PC-9 (cell line): ENCODE measurements at regions of chr1 and their contacts with region 1.

Region 1: DNA sequence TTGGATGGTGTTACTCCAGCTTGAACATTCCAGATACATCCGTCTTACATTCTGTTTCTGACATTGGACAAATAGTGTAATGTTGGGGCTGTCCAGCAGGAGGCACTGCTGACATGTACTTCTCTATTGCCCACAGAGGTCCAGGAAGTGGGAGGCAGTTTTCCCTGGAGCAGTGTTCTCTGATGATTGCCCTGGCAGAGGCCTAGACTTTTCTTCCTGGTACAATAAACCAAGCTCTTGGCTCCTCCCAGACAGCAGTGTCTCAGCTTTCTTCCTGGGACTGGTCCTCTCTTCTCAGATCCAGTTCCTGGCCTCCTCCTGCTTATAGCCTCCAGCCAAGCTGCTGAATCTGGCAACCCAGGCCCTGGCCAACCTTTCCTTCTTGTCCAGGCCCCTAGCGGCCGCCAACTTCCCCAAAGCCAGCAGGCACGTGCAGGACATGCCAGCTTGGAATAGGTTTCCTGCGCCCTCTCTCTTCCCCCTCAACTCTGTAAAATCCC is 14.9 kb upstream of the IFNLR1 start:
- DNase-seq: peak; percentile 86 to 89
- H3K4me3 ChIP-seq: no peak overlapping the region
- H3K27ac ChIP-seq: peak overlapping the region; percentile 76
- H3K4me1 ChIP-seq: peaks cover 27% of the 10 kb centered on the region
- H3K27me3 ChIP-seq: no peaks in the 10 kb centered on the region
- CTCF ChIP-seq: peak; percentile 86

Region 2: DNA sequence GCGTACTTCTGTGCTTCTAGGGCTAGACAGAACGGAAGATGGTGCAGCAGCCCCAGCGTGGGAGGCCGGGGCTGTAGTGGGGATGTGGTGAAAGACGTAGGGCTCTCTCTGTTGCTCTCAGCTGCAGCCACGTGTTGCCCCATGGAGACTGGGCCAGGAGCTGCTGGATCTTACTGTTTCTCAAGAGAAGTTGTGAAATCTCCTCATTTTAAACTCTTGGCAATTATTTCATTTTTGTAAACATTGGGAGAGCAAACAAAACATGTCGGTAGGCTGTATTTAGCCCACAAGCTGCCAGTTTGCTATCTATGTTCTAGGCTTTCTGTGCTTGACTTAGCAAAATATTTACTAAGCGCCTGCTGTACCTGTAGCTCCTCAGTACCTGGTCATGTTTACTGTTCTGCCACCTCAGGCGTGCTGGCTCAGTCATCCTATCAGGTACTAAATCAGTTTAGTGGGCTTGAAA is 474.6 kb before region 1 on chr1:
- CTCF ChIA-PET with region 1: no interaction called
- POLR2A ChIA-PET with region 1: no interaction called
- intact Hi-C with region 1: no loop called
- DNase-seq: no peak
- H3K4me3 ChIP-seq: no peak overlapping the region
- H3K27ac ChIP-seq: no peak overlapping the region
- H3K4me1 ChIP-seq: no peaks in the 10 kb centered on the region
- H3K27me3 ChIP-seq: no peaks in the 10 kb centered on the region
- CTCF ChIP-seq: no peak

Region 3: DNA sequence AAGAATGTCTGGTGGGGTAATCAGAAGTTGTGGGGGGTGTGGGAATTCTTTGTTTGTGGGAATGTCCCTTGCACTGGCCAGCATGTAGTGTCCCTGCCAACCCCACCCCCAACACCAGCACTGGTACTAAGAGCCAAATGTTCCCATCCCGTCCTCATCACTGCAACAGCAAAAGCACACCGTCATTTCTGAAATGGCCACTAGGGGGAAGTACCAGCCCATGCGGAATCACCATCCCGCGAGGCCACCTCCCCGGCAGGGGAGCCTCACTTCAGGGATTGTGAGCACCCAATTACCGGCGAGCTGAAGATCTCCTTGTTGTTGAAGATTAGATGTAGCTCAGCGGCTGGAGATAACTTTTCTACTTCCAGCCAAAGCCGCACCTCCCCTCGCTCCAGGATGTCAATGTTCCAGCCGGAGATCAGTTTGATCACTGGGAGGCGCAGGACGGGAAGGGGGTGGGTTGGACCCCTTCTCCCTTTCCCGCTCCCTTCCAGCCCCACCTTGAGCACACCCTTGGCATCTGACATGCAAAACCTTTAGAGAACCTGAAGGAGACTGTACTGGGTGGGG is 131.1 kb before region 1 on chr1:
- CTCF ChIA-PET with region 1: interaction called, 4 read pairs
- POLR2A ChIA-PET with region 1: no interaction called
- intact Hi-C with region 1: loop called (anchors 2 kb)
- DNase-seq: peak; percentile 57 to 76
- H3K4me3 ChIP-seq: no peak overlapping the region
- H3K27ac ChIP-seq: no peak overlapping the region
- H3K4me1 ChIP-seq: no peaks in the 10 kb centered on the region
- H3K27me3 ChIP-seq: no peaks in the 10 kb centered on the region
- CTCF ChIP-seq: peak; percentile 88

Region 4: DNA sequence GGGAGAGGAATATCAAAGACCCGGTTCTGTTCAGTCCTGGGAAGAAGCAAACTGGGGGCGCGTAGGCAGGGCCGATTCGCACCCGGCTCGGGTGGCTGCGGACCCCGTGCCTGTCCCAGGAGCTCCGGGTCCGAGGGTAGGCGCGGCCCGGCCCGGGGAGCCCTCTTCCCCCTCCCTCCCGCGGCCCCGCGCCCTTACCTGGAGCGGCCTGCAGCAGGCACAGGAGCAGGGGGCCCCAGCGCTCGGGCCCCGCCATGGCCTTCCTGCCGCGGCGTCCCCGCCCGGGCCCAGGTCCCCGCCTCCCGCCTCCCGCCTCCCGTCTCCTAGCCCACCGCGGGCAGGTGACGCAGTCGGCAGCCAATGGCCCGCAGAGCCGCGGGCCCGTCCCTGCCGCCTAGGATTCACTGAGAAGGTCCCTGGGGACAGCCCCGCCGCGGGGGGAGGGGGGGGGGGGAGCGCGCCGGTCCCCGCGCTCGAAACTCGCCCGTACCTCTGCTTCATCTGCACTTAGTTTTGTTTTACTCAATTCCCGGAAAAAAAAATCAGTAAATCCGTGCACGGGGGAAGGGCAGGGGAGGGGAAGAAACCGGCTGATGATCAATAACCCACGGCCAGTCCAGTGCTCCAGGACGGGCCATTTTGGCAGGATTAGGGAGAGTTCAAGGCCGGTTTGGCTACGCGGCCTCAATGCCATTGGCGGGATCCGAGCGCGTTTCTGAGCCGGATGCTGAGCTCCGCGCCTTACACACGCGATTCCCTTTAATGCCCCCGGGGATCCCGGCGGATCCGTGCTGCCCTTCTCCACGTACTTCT is 14.8 kb before region 1 on chr1 and contains the start of gene IFNLR1:
- CTCF ChIA-PET with region 1: interaction called, 4 read pairs
- POLR2A ChIA-PET with region 1: interaction called, 20 read pairs
- intact Hi-C with region 1: no loop called
- DNase-seq: peak; percentile 55 to 76
- H3K4me3 ChIP-seq: peak within 1 kb of the TSS; percentile 73
- H3K27ac ChIP-seq: peak within 1 kb of the TSS; percentile 37
- H3K4me1 ChIP-seq: peaks cover 21% of the 10 kb centered on the region
- H3K27me3 ChIP-seq: no peaks in the 10 kb centered on the region
- CTCF ChIP-seq: no peak
- total RNA-seq, gene IFNLR1: 5.5 and 8.1 TPM in 2 replicates

Region 5: GRCh38 chr1:24283326-24284155 is 81.5 kb after region 1 on chr1:
- CTCF ChIA-PET with region 1: interaction called, 13 read pairs
- POLR2A ChIA-PET with region 1: interaction called, 17 read pairs
- intact Hi-C with region 1: no loop called
- DNase-seq: peak; percentile 54 to 90
- H3K4me3 ChIP-seq: no peak overlapping the region
- H3K27ac ChIP-seq: peak overlapping the region; percentile 94
- H3K4me1 ChIP-seq: peaks cover 59% of the 10 kb centered on the region
- H3K27me3 ChIP-seq: no peaks in the 10 kb centered on the region
- CTCF ChIP-seq: no peak

Region 6: GRCh38 chr1:24391882-24392603 is 190.1 kb after region 1 on chr1:
- CTCF ChIA-PET with region 1: interaction called, 43 read pairs
- POLR2A ChIA-PET with region 1: interaction called, 4 read pairs
- intact Hi-C with region 1: loop called (anchors 1 kb)
- DNase-seq: peak; percentile 47 to 50
- H3K4me3 ChIP-seq: no peak overlapping the region
- H3K27ac ChIP-seq: peak overlapping the region; percentile 14; the same call in 1 of the 2 replicates
- H3K4me1 ChIP-seq: peaks cover 8% of the 10 kb centered on the region
- H3K27me3 ChIP-seq: no peaks in the 10 kb centered on the region
- CTCF ChIP-seq: peak; percentile 80

Region 7: GRCh38 chr1:24502709-24503058 is 300.7 kb after region 1 on chr1 and contains the start of gene RCAN3:
- CTCF ChIA-PET with region 1: interaction called, 6 read pairs
- POLR2A ChIA-PET with region 1: interaction called, 31 read pairs
- intact Hi-C with region 1: no loop called
- DNase-seq: peak; percentile 65 to 91
- H3K4me3 ChIP-seq: peak within 1 kb of the TSS; percentile 74
- H3K27ac ChIP-seq: no peak within 1 kb of the TSS
- H3K4me1 ChIP-seq: peaks cover 6% of the 10 kb centered on the region; the same call in 1 of the 2 replicates
- H3K27me3 ChIP-seq: no peaks in the 10 kb centered on the region
- CTCF ChIP-seq: no peak
- total RNA-seq, gene RCAN3: 21.9 and 27.4 TPM in 2 replicates

Region 8: DNA sequence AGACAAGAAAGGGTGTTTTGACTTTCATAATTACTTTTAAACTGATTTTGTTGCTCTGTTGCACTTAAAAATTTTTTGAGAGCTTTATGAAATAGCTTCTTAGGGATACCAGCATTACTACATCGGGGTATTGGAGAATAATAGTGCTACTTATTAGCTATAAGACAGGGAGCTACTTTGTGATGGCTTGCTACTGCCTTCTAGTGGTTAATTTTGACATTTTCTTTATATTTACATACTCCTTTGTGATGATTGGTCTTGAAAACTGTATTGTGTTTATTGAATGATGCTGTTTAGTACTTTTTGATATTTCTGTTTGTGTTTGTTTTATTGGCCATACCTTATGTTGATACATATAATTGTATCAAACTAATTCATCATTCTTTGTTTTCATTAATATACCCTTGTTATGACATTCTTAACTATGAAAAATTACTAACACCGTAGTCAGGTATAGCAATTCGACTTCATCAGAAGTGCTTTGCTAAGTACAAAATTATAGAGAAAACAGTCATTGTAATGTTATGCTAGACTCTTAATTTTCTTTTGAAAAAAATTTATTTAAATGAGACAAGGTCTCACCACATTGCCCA is 628.8 kb after region 1 on chr1:
- CTCF ChIA-PET with region 1: interaction called, 9 read pairs
- POLR2A ChIA-PET with region 1: interaction called, 3 read pairs
- intact Hi-C with region 1: loop called (anchors 10 kb)
- DNase-seq: peak in 1 of 2 experiments; percentile 54
- H3K4me3 ChIP-seq: no peak overlapping the region
- H3K27ac ChIP-seq: no peak overlapping the region
- H3K4me1 ChIP-seq: no peaks in the 10 kb centered on the region
- H3K27me3 ChIP-seq: no peaks in the 10 kb centered on the region
- CTCF ChIP-seq: peak; percentile 80